ENCODE measurements at regions of chr9 and their contacts with region 1.

Region 1: GRCh38 chr9:108933718-108934322 is at the start of gene ELP1:
- DNase-seq: peak; percentile 45
- ATAC-seq: peak; percentile 90
- H3K4me3 ChIP-seq: peak within 1 kb of the TSS; percentile 100
- H3K27ac ChIP-seq: peak within 1 kb of the TSS; percentile 84
- H3K4me1 ChIP-seq: no peaks in the 10 kb centered on the region
- H3K27me3 ChIP-seq: no peaks in the 10 kb centered on the region
- CTCF ChIP-seq: peak; percentile 24 to 41 (median 29); a peak in 4 of 6 replicates
- EP300 ChIP-seq: no peak
- POLR2A ChIP-seq: peak; percentile 86
- RAD21 ChIP-seq: peak; percentile 19; the same call in 1 of the 2 replicates
- polyA plus RNA-seq, gene ELP1: 9.7 to 14.4 TPM

Region 2: GRCh38 chr9:109119439-109120203 is 185.8 kb after region 1 on chr9 and contains the start of gene TMEM245:
- CTCF ChIA-PET with region 1: no interaction called
- POLR2A ChIA-PET with region 1: no interaction called
- RAD21 ChIA-PET with region 1: no interaction called
- SMC1A ChIA-PET with region 1: no interaction called
- in situ Hi-C with region 1: no loop called
- intact Hi-C with region 1: loop called (anchors 10 kb)
- DNase-seq: peak; percentile 92
- ATAC-seq: peak; percentile 93
- H3K4me3 ChIP-seq: peak within 1 kb of the TSS; percentile 87
- H3K27ac ChIP-seq: peak within 1 kb of the TSS; percentile 65
- H3K4me1 ChIP-seq: peaks cover 12% of the 10 kb centered on the region
- H3K27me3 ChIP-seq: no peaks in the 10 kb centered on the region
- CTCF ChIP-seq: no peak
- EP300 ChIP-seq: 0 out of 4 replicates have a peak, but pooled peaks of 1 of the 2 experiments have one; percentile 19
- POLR2A ChIP-seq: peak; percentile 85
- RAD21 ChIP-seq: no peak
- polyA plus RNA-seq, gene TMEM245: 7.4 to 11.0 TPM

Measured in GM12878 (cell line).